ENCODE measurements at regions of chr2 and their contacts with region 1.

Region 1: GRCh38 chr2:26727641-26728561 is 35.4 kb downstream of the KCNK3 start:
- DNase-seq: no peak
- H3K4me3 ChIP-seq: no peak overlapping the region
- H3K27me3 ChIP-seq: peaks cover 4% of the 10 kb centered on the region
- CTCF ChIP-seq: peak; percentile 38

Region 2: DNA sequence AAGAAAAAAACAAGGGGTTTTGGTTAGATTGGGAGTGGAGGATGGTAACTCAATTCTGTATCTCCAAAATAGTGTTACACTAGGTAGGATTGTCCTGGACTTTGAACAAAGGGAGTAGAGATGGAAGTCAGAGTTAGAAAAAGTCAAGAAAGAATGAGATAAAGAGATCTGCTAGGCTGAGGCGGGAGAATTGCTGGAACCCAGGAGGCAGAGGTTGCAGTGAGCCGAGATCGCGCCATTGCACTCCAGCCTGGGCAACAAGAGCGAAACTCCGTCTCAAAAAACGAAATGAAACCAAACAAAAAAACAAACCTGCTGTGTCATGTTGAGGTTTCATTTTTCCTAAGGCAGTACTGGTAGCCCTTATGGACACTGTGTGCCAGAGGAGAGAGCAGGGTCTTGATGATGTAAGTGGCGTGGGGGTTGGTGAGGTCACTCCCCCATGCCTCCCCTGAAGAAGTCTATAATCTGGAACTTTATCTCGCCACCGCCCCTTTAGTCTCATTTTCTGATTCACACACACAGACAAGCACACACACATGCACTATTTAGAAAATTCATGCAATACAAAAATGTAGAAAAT is 315.7 kb before region 1 on chr2:
- CTCF ChIA-PET with region 1: no interaction called
- POLR2A ChIA-PET with region 1: no interaction called
- DNase-seq: no peak
- H3K4me3 ChIP-seq: no peak overlapping the region
- H3K27me3 ChIP-seq: peaks cover 4% of the 10 kb centered on the region
- CTCF ChIP-seq: no peak

Region 3: DNA sequence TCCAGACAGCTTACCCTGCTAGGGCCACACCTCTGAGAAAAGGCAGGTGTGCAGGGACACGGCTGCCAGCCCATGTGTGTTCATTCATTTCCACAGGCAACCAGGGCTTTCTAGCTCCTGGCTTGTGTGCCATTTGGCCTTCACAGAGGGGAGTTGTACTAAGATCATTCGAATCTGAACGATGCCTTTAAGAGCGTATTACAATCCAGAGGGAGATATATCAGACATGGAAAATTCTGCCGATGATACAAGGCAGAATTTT is 185.8 kb before region 1 on chr2:
- CTCF ChIA-PET with region 1: no interaction called
- POLR2A ChIA-PET with region 1: no interaction called
- DNase-seq: no peak
- H3K4me3 ChIP-seq: no peak overlapping the region
- H3K27me3 ChIP-seq: peaks cover 11% of the 10 kb centered on the region
- CTCF ChIP-seq: no peak

Region 4: GRCh38 chr2:26672818-26673393 is 55.0 kb before region 1 on chr2:
- CTCF ChIA-PET with region 1: no interaction called
- POLR2A ChIA-PET with region 1: interaction called, 10 read pairs
- DNase-seq: no peak
- H3K4me3 ChIP-seq: no peak overlapping the region
- H3K27me3 ChIP-seq: peaks cover 22% of the 10 kb centered on the region
- CTCF ChIP-seq: no peak